Mammary epithelial cell (primary cell): ENCODE measurements at regions of chr7 and their contacts with region 1.

Region 1: GRCh38 chr7:142516038-142516501 is 233.2 kb upstream of the PRSS1 start:
- DNase-seq: peak; percentile 61
- H3K4me3 ChIP-seq: no peak overlapping the region
- H3K27ac ChIP-seq: no peak overlapping the region
- H3K4me1 ChIP-seq: peaks cover 5% of the 10 kb centered on the region
- H3K27me3 ChIP-seq: no peaks in the 10 kb centered on the region
- CTCF ChIP-seq: peak; percentile 82 to 84

Region 2: GRCh38 chr7:142323706-142324105 is 192.4 kb before region 1 on chr7:
- CTCF ChIA-PET with region 1: interaction called, 17 read pairs
- dilution Hi-C with region 1: no loop called
- in situ Hi-C with region 1: no loop called
- intact Hi-C with region 1: no loop called
- DNase-seq: peak; percentile 9
- H3K4me3 ChIP-seq: no peak overlapping the region
- H3K27ac ChIP-seq: no peak overlapping the region
- H3K4me1 ChIP-seq: peaks cover 6% of the 10 kb centered on the region
- H3K27me3 ChIP-seq: no peaks in the 10 kb centered on the region
- CTCF ChIP-seq: peak; percentile 59 to 72

Region 3: DNA sequence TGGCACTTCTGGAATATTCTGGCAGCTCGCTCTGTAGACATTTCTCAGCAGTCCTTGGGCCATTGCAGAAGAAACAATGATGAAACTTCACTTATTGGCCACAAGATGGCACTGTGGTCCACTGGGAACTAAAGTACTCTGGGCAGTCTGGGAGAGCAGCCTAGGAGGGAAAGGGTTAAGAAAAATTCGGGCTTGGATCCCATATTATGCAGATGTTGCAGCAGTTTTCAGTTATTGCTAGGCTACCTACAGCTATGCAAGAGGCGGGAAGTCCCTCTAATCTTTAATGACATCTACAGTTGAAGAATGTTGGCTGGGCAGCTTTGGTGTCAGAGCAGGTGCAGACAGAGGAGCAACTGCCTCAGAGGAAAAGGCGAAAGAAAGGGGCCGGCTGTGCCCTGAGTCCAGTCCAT is 56.5 kb before region 1 on chr7:
- CTCF ChIA-PET with region 1: interaction called, 11 read pairs
- dilution Hi-C with region 1: no loop called
- in situ Hi-C with region 1: no loop called
- intact Hi-C with region 1: loop called (anchors 1 kb)
- DNase-seq: peak; percentile 67
- H3K4me3 ChIP-seq: no peak overlapping the region
- H3K27ac ChIP-seq: no peak overlapping the region
- H3K4me1 ChIP-seq: peaks cover 19% of the 10 kb centered on the region
- H3K27me3 ChIP-seq: no peaks in the 10 kb centered on the region
- CTCF ChIP-seq: peak; percentile 70 to 77

Region 4: GRCh38 chr7:142496545-142497041 is 19.5 kb before region 1 on chr7:
- CTCF ChIA-PET with region 1: interaction called, 3 read pairs
- dilution Hi-C with region 1: no loop called
- in situ Hi-C with region 1: no loop called
- intact Hi-C with region 1: loop called (anchors 1 kb)
- DNase-seq: peak; percentile 46
- H3K4me3 ChIP-seq: no peak overlapping the region
- H3K27ac ChIP-seq: no peak overlapping the region
- H3K4me1 ChIP-seq: peaks cover 22% of the 10 kb centered on the region
- H3K27me3 ChIP-seq: no peaks in the 10 kb centered on the region
- CTCF ChIP-seq: peak; percentile 67 to 74

Region 5: DNA sequence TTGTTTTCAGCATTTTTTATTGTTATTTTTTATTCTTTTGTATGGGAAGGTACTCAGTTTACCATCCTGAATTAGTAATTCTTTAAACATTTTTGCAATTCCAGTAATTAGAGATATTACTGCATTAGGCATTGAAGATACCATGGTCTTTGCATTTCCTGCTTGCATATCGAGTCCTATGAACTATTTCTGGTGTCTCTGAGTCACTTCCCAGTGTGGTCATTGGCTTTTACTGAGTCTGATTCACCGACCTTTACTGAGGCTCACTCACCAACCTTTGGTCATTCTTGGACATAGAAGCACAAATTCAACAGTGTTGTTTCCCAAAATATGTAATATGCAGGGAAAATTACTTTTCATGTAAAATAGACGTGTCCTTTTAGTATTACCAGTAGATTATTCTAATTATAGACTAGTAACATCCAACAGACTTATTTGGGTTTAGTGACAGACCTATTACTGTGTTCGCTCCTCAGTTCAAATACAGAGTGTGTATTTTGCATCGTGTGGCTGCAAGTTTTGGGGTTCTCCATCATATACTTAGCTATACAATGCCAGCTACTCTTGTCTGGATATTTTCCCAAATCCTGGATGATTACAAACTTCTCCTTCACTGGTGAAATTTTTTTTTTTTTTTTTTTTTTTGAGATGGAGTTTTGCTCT is 52.5 kb after region 1 on chr7:
- CTCF ChIA-PET with region 1: interaction called, 3 read pairs
- dilution Hi-C with region 1: loop called (anchors 5 kb)
- in situ Hi-C with region 1: no loop called
- intact Hi-C with region 1: no loop called
- DNase-seq: peak; percentile 71
- H3K4me3 ChIP-seq: no peak overlapping the region
- H3K27ac ChIP-seq: no peak overlapping the region
- H3K4me1 ChIP-seq: peaks cover 12% of the 10 kb centered on the region
- H3K27me3 ChIP-seq: no peaks in the 10 kb centered on the region
- CTCF ChIP-seq: no peak